ENCODE measurements at regions of chr11 and their contacts with region 1.

Region 1: DNA sequence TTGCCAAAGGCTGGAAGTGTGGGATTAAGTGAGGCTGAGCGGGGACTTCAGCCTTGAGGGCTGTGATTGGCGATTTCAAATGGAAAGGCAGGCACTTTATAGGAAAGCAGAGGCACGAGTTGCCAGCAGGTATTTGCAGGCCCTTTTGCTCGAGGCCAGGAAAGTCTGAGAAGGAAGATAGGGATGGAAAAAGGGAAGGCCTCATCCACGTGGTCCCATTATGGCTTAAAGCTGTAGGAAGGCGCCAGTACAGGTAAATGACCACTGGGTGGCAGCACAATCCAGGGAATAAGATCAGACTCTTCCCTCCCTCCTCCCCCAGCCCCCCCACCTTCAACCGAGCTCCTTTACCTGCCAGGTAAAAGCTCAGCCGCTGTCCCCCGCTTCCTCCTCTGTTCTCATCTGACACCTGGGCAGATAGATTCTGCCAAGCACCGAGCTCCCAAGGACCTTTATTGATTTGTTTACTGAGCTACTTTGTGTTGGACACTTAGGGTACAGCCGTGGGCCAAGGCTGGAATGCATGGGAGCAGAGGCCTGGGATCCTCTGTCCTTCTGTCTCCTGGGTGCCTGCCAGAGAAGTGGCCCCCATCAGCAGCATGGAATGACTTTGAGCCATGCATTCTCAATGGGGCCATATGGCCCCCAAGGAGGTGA is 7.5 kb downstream of the P2RX3 start:
- DNase-seq: peak; percentile 39 to 68 (median 62)
- ATAC-seq: peak; percentile 87
- H3K4me3 ChIP-seq: no peak overlapping the region
- H3K4me3 Mint-ChIP-seq: no peak overlapping the region
- H3K27ac ChIP-seq: no peak overlapping the region
- H3K27ac Mint-ChIP-seq: no peak overlapping the region
- H3K4me1 ChIP-seq: no peaks in the 10 kb centered on the region
- H3K4me1 Mint-ChIP-seq: peaks cover 0 to 10% (median 0%) of the 10 kb centered on the region in 7 donors
- H3K27me3 ChIP-seq: no peaks in the 10 kb centered on the region
- H3K27me3 Mint-ChIP-seq: no peaks in the 10 kb centered on the region

Region 2: DNA sequence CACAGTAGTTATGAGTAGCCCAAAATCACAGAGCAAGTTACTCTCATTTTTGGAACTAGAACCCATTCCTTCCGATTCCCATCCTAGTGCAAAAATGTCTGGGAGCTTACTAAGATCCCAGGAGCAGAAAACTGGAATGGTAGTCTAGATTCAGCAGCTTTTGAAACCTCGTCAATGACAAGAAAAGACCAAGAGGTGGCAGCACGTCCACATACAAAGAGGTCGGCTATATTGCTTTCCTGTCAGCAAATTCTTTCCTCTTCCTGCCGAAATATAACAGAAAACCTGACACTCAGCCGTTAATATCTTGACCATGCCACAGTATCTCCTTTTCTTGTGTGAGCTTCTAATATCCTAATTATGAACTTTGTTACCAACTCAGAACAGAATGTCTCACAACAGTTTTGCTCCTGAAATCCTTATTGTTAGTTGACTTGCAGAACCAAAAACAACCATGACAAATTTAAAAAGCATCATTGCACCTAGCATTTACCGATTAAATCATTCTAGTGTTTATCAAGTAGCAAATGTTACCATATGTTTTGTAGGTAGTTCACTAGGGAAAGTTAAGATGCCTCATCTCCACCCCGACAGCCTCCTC is 504.4 kb before region 1 on chr11:
- CTCF ChIA-PET with region 1: no interaction called
- POLR2A ChIA-PET with region 1: no interaction called
- intact Hi-C with region 1: loop called in 1 of 2 experiments (anchors 2 kb)
- DNase-seq: peak in 2 of 9 donors; percentile 1 to 12
- ATAC-seq: no peak
- H3K4me3 ChIP-seq: no peak overlapping the region
- H3K4me3 Mint-ChIP-seq: no peak overlapping the region
- H3K27ac ChIP-seq: no peak overlapping the region
- H3K27ac Mint-ChIP-seq: no peak overlapping the region
- H3K4me1 ChIP-seq: no peaks in the 10 kb centered on the region
- H3K4me1 Mint-ChIP-seq: peaks cover 0 to 2% (median 0%) of the 10 kb centered on the region in 7 donors
- H3K27me3 ChIP-seq: no peaks in the 10 kb centered on the region
- H3K27me3 Mint-ChIP-seq: peaks cover 0 to 20% (median 4%) of the 10 kb centered on the region in 5 donors

Region 3: GRCh38 chr11:57180081-57180561 is 165.6 kb before region 1 on chr11:
- CTCF ChIA-PET with region 1: no interaction called
- POLR2A ChIA-PET with region 1: no interaction called
- intact Hi-C with region 1: no loop called
- DNase-seq: no peak
- ATAC-seq: no peak
- H3K4me3 ChIP-seq: no peak overlapping the region
- H3K4me3 Mint-ChIP-seq: no peak overlapping the region
- H3K27ac ChIP-seq: no peak overlapping the region
- H3K27ac Mint-ChIP-seq: no peak overlapping the region
- H3K4me1 ChIP-seq: no peaks in the 10 kb centered on the region
- H3K4me1 Mint-ChIP-seq: peaks cover 0 to 8% (median 0%) of the 10 kb centered on the region in 7 donors
- H3K27me3 ChIP-seq: peaks cover 0 to 3% of the 10 kb centered on the region in 2 donors
- H3K27me3 Mint-ChIP-seq: peaks cover 27 to 62% (median 48%) of the 10 kb centered on the region in 5 donors

Region 4: GRCh38 chr11:57335343-57336110 is 10.2 kb before region 1 on chr11 and contains the start of gene SSRP1:
- CTCF ChIA-PET with region 1: interaction called, 4 read pairs
- POLR2A ChIA-PET with region 1: no interaction called
- intact Hi-C with region 1: loop called in 1 of 2 experiments (anchors 1 kb)
- DNase-seq: peak; percentile 64 to 90 (median 85)
- ATAC-seq: peak; percentile 99
- H3K4me3 ChIP-seq: peak within 1 kb of the TSS; percentile 77
- H3K4me3 Mint-ChIP-seq: peak within 1 kb of the TSS; percentile 91 to 98 (median 96)
- H3K27ac ChIP-seq: peak within 1 kb of the TSS; percentile 91
- H3K27ac Mint-ChIP-seq: peak within 1 kb of the TSS; percentile 96 to 100 (median 99)
- H3K4me1 ChIP-seq: peaks cover 15 to 19% of the 10 kb centered on the region in 2 donors
- H3K4me1 Mint-ChIP-seq: peaks cover 18 to 44% (median 35%) of the 10 kb centered on the region in 7 donors
- H3K27me3 ChIP-seq: no peaks in the 10 kb centered on the region
- H3K27me3 Mint-ChIP-seq: peaks cover 0 to 2% (median 0%) of the 10 kb centered on the region in 5 donors
- total RNA-seq, gene SSRP1: 46.9 to 146 (median 70.1) TPM

Region 5: GRCh38 chr11:57426929-57427726 is 81.4 kb after region 1 on chr11 and contains the start of gene SLC43A3:
- CTCF ChIA-PET with region 1: no interaction called
- POLR2A ChIA-PET with region 1: no interaction called
- intact Hi-C with region 1: loop called in 1 of 2 experiments (anchors 1 kb)
- DNase-seq: peak; percentile 18 to 79 (median 38)
- ATAC-seq: peak; percentile 63
- H3K4me3 ChIP-seq: peak within 1 kb of the TSS; percentile 56
- H3K4me3 Mint-ChIP-seq: peak within 1 kb of the TSS; percentile 83 to 92 (median 89)
- H3K27ac ChIP-seq: peak within 1 kb of the TSS; percentile 62
- H3K27ac Mint-ChIP-seq: peak within 1 kb of the TSS; percentile 52 to 93 (median 82)
- H3K4me1 ChIP-seq: peaks cover 24 to 36% of the 10 kb centered on the region in 2 donors
- H3K4me1 Mint-ChIP-seq: peaks cover 40 to 55% (median 50%) of the 10 kb centered on the region in 7 donors
- H3K27me3 ChIP-seq: no peaks in the 10 kb centered on the region
- H3K27me3 Mint-ChIP-seq: peaks cover 0 to 24% (median 0%) of the 10 kb centered on the region in 5 donors
- total RNA-seq, gene SLC43A3: 10.5 to 67.9 (median 12.2) TPM

Region 6: DNA sequence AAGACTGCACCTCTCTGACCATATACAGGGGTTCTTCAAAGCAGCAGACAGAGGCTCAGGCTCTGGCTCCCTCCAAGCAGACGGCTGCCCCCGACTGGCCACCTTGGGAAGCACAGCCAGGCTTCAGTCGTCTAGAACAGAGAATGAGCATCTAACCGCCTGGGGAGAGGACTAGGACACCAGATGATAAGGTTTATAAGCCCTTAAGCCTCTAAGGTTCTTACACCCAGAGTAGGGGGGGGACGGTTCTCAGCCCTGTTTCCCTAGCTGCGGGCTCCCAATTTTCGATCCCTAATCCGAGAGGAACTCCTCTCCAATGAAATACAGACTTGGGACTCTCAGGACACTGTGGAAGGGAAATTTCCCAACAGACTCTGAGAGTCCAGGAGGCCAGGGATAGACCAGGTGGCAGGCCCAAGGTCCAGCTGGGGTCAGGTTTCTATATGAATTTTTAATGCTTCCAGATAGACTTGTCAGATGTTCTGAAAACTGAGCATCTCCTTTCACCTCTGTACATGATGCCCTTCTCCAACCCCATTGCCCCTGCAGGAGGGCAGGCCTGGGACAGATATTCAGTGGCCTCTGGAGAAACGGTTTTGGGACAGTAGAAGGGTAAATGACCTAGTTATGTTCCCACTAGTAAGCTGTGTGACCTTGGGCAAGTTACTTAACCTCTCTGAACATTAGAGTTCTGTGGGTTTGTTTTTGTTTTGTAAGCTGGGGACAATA is 134.9 kb after region 1 on chr11:
- CTCF ChIA-PET with region 1: interaction called, 4 read pairs
- POLR2A ChIA-PET with region 1: no interaction called
- intact Hi-C with region 1: loop called (anchors 1 kb)
- DNase-seq: peak in 8 of 9 donors; percentile 30 to 75 (median 49)
- ATAC-seq: peak; percentile 58
- H3K4me3 ChIP-seq: no peak overlapping the region
- H3K4me3 Mint-ChIP-seq: peak overlapping the region in 1 of 10 donors; percentile 15
- H3K27ac ChIP-seq: no peak overlapping the region
- H3K27ac Mint-ChIP-seq: peak overlapping the region in 1 of 9 donors; percentile 49
- H3K4me1 ChIP-seq: peaks cover 10 to 19% of the 10 kb centered on the region in 2 donors
- H3K4me1 Mint-ChIP-seq: peaks cover 0 to 28% (median 18%) of the 10 kb centered on the region in 7 donors
- H3K27me3 ChIP-seq: no peaks in the 10 kb centered on the region
- H3K27me3 Mint-ChIP-seq: peaks cover 0 to 67% (median 16%) of the 10 kb centered on the region in 5 donors

Region 7: GRCh38 chr11:57644748-57645688 is 299.3 kb after region 1 on chr11:
- CTCF ChIA-PET with region 1: interaction called, 9 read pairs
- POLR2A ChIA-PET with region 1: no interaction called
- intact Hi-C with region 1: loop called (anchors 1 kb)
- DNase-seq: peak; percentile 61 to 91 (median 85)
- ATAC-seq: peak; percentile 87
- H3K4me3 ChIP-seq: no peak overlapping the region
- H3K4me3 Mint-ChIP-seq: no peak overlapping the region
- H3K27ac ChIP-seq: no peak overlapping the region
- H3K27ac Mint-ChIP-seq: peak overlapping the region in 2 of 9 donors; percentile 36 to 56
- H3K4me1 ChIP-seq: peaks cover 11 to 14% of the 10 kb centered on the region in 2 donors
- H3K4me1 Mint-ChIP-seq: peaks cover 25 to 60% (median 41%) of the 10 kb centered on the region in 7 donors
- H3K27me3 ChIP-seq: peaks cover 10 to 18% of the 10 kb centered on the region in 2 donors
- H3K27me3 Mint-ChIP-seq: peaks cover 30 to 60% (median 47%) of the 10 kb centered on the region in 5 donors

Region 8: DNA sequence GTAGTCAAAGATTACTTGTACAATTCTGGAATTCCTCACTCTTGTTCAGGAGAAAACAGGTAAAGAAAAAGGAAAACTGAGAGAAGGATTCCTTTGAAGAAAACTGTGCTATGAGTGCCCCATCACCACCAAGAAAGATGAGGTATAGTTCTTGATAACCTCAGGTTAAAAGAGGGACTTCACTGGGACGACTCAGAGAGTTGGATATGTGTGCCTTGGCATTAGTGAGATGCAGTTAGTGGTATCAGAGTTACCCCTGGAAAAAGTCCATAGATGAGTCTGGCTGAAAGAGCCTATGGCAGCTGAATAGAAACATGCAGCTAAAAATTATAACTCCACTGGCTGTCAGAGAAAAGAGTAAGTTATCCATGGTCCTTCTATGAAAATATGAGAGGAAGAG is 1201.2 kb after region 1 on chr11:
- CTCF ChIA-PET with region 1: no interaction called
- POLR2A ChIA-PET with region 1: no interaction called
- intact Hi-C with region 1: no loop called
- DNase-seq: no peak
- ATAC-seq: no peak
- H3K4me3 ChIP-seq: no peak overlapping the region
- H3K4me3 Mint-ChIP-seq: no peak overlapping the region
- H3K27ac ChIP-seq: no peak overlapping the region
- H3K27ac Mint-ChIP-seq: peak overlapping the region in 7 of 9 donors; percentile 6 to 82 (median 53)
- H3K4me1 ChIP-seq: peaks cover 0 to 12% of the 10 kb centered on the region in 2 donors
- H3K4me1 Mint-ChIP-seq: peaks cover 2 to 49% (median 25%) of the 10 kb centered on the region in 7 donors
- H3K27me3 ChIP-seq: no peaks in the 10 kb centered on the region
- H3K27me3 Mint-ChIP-seq: no peaks in the 10 kb centered on the region